MCF 10A (cell line): ENCODE measurements at regions of chr2 and their contacts with region 1.

Region 1: DNA sequence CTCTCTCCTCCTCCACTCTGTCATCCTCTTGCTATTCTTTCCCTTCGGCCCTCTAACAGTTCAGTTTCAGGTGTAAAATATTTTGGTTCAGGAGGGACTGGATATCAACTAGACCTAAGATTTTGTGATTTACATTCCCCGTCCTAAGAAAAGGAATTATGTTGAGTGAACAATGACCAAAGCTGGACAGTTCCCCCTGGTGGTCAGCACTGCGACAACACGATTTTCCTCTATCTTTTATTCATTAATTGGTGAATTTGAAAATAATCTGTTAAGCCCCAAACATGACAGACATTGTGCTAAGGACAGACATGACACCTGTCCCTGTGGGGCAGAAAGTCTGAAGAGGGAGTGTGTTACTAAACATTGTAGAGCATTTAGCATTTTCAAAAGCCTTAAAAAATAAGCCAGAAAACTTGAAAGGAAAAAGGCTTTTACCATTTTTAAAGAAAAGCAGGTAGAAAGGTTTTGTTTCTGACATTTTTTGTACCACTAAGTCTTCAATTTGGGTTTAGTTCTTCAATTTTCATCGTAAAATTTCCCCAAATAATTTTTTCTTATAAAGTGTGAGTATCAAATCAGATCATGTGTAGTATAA is 28.4 kb upstream of the GTF2A1L start:
- DNase-seq: peak; percentile 49
- H3K4me3 Mint-ChIP-seq: no peak overlapping the region
- H3K27ac Mint-ChIP-seq: no peak overlapping the region
- H3K4me1 Mint-ChIP-seq: no peaks in the 10 kb centered on the region
- H3K27me3 Mint-ChIP-seq: no peaks in the 10 kb centered on the region
- CTCF ChIP-seq: peak; percentile 71

Region 2: GRCh38 chr2:48605482-48606175 is 16.4 kb after region 1 on chr2:
- CTCF ChIA-PET with region 1: interaction called, 11 read pairs
- POLR2A ChIA-PET with region 1: no interaction called
- intact Hi-C with region 1: no loop called
- DNase-seq: no peak
- H3K4me3 Mint-ChIP-seq: no peak overlapping the region
- H3K27ac Mint-ChIP-seq: no peak overlapping the region
- H3K4me1 Mint-ChIP-seq: no peaks in the 10 kb centered on the region
- H3K27me3 Mint-ChIP-seq: no peaks in the 10 kb centered on the region
- CTCF ChIP-seq: no peak